ENCODE measurements at regions of chr5 and their contacts with region 1.

Region 1: DNA sequence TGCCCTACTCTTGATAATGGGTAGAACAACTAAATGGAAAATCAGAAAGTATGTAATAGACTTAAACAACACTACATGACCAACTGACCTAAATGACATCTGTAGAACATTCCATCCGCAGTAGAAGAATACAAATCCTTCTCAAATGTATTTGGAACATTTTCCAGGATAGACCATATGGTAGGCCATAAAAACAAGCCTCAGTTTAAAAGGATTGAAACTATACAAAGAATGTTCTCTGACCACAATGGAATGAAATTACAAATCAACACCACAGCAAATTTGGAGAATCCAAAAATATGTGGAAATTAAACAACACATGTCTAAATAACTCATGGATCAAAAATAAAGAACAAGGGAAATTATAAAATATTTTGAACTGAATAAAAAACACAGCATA is 189.2 kb downstream of the NDUFS4 start:
- DNase-seq: no peak
- H3K4me3 ChIP-seq: no peak overlapping the region
- H3K27ac ChIP-seq: no peak overlapping the region
- H3K4me1 ChIP-seq: no peaks in the 10 kb centered on the region
- H3K27me3 ChIP-seq: no peaks in the 10 kb centered on the region
- CTCF ChIP-seq: no peak

Region 2: DNA sequence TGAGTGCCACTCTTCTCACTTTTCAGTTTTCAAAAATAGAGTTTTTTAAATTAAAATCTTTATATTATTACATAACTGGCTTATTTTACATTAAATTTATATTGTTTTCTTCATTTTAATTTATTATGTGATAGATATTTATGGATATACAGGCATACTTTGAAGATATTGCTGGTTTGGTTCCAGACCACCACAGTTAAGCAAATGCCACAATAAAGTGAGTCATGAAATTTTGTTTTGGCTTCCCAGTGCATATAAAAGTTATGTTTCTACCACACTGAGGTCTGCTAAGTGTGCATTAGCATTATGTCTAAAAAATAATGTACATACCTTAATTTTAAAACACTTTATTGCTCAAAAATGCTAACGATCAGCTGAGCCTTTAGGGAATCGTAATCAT is 141.7 kb before region 1 on chr5:
- CTCF ChIA-PET with region 1: no interaction called
- POLR2A ChIA-PET with region 1: no interaction called
- intact Hi-C with region 1: no loop called
- DNase-seq: no peak
- H3K4me3 ChIP-seq: no peak overlapping the region
- H3K27ac ChIP-seq: no peak overlapping the region
- H3K4me1 ChIP-seq: no peaks in the 10 kb centered on the region
- H3K27me3 ChIP-seq: no peaks in the 10 kb centered on the region
- CTCF ChIP-seq: no peak

Region 3: DNA sequence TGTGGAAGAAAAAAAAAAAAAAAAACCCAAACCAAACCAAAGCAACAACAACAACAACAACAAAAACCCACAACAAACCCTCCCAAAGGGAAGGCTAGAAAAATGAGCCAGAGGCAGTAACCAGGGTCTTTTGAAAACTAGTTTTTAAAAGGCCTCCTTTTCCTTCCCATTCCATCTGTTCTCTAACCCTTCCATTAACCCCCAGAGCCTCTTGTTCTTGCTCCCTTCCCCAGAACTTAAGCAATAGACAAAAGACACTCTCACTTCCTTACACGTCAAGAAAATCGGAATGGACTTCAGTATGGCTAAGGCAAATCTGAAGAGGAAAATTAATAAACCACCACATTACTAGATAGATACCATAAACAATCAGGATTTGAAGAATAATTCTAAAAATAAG is 268.0 kb after region 1 on chr5:
- CTCF ChIA-PET with region 1: no interaction called
- POLR2A ChIA-PET with region 1: interaction called, 10 read pairs
- intact Hi-C with region 1: no loop called
- DNase-seq: no peak
- H3K4me3 ChIP-seq: no peak overlapping the region
- H3K27ac ChIP-seq: no peak overlapping the region
- H3K4me1 ChIP-seq: no peaks in the 10 kb centered on the region
- H3K27me3 ChIP-seq: no peaks in the 10 kb centered on the region
- CTCF ChIP-seq: no peak

Measured in PC-9 (cell line).